AG04450 (cell line): ENCODE measurements at regions of chr11 and their contacts with region 1.

Region 1: DNA sequence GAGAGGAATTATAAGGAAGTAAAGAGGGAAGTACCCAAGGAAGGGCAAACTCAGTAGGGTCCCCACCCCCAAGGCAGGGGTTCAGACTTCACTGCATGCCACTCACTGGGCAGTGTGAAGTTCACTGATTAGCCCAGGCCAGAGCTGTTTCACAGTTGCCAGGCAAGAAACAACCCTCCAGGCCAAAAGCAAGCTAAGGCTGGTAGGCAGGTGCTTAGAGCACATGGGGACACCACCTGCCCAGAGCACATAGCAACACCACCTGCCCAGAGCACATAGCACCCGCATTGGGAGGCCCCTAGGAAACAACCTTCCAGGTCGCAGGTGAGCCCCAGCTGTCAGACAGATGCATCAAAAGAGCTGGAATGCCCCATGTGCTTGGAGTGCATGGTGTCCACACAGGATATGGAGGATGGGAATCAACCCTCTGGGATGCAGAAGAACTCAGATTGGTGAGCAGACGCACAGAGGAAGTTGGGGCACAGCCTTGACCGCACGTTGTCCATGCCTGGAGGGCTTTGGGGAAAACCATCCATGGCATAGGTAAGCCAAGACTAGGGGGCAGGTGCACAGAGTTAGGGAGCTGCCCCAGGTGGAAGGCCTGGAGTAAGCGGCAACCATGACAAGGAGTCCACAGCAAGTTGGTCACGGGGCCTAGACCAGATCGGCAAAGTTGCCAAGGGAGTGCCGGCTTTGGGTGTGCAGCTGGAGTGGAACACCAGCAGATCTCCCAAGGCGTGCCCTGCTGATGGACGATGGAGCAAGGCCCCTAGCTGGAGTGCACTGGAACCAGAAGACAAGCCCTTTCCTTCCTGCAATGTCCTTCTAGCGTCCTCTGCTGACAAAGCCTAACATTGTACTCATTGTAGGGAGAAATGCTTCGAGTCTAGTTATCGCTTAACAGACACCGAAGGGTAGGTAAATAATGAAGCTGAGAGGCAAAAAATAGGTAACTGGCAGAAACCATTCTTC is 7.8 kb upstream of the TMEM216 start:
- DNase-seq: no peak
- H3K4me3 ChIP-seq: no peak overlapping the region
- H3K27ac ChIP-seq: no peak overlapping the region
- H3K27me3 ChIP-seq: no peaks in the 10 kb centered on the region
- CTCF ChIP-seq: peak; percentile 40

Region 2: DNA sequence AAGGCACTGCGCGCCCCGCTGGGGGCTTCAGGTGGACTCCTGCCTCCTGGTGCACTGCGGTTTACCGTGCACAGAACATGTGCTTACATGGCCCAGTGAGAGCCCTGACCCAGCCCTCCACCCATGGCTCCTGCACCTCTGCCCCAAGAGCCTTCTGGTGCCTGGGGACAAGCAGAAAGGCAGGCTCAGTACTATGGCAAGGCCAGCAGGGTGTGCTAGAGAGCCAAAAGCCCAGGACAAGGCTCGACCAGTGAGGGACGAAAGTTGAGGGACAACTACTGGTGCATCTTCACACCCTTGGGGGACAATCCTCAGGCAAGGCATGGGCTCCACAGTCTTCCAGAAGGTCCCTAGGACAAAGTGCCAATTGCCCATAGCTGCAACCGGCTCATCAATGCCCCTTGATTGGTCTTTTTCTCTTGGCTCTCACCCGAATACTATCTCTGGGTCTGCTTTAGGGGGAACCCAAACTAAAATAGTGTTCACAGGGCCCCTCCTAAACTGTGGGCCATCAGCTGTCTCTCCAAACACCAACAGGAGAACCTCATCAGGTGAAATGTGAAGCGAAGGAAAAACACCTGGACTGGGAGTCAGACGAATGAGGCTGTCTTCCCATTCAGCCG is 130.0 kb before region 1 on chr11:
- CTCF ChIA-PET with region 1: interaction called, 23 read pairs
- POLR2A ChIA-PET with region 1: interaction called, 3 read pairs
- DNase-seq: peak; percentile 27
- H3K4me3 ChIP-seq: no peak overlapping the region
- H3K27ac ChIP-seq: no peak overlapping the region
- H3K27me3 ChIP-seq: peaks cover 6% of the 10 kb centered on the region
- CTCF ChIP-seq: peak; percentile 93

Region 3: DNA sequence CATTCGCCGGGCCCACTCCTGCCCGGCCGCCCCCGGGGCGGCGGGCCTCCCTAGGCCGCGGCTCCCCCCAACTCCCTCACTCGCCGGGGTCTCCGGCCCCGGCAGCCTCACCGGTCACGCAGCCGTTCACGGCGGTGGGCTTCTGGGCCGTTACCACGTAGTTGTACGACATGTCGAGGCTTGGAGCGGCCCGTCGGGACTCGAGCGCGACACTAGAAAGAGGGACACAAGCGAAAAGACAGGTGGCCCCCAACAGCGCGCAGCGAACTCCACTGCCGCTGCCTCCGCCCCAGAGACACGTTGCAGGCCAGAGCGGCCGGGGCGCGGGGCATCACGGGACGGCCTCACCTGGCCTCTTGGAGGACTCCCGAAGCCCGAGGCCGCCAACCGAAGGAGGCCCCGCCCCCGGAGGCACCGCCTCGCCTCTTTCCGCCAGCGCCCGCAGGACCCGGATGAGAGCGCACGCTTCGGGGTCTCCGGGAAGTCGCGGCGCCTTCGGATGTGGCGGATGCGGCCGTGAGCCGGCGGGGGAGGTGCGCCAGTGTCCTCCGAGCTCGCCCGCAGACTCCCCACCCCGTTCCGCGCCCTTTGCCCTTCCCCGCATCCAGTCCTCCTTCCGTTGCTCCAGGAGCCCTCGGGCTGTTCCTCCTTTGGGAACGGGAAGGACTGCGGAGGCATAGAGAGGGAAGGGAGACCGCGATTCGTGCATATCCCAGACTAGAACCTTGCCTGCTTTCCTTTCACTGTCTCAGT is 51.6 kb before region 1 on chr11 and contains the starts of genes DDB1 and TKFC:
- CTCF ChIA-PET with region 1: interaction called, 519 read pairs
- POLR2A ChIA-PET with region 1: interaction called, 12 read pairs
- DNase-seq: peak; percentile 66
- H3K4me3 ChIP-seq: peak within 1 kb of the TSS; percentile 93
- H3K27ac ChIP-seq: peak within 1 kb of the TSS; percentile 73
- H3K27me3 ChIP-seq: no peaks in the 10 kb centered on the region
- CTCF ChIP-seq: no peak
- polyA plus RNA-seq, gene DDB1: 286 and 340 TPM in 2 replicates
- polyA plus RNA-seq, gene TKFC: 20.3 and 24.9 TPM in 2 replicates

Region 4: DNA sequence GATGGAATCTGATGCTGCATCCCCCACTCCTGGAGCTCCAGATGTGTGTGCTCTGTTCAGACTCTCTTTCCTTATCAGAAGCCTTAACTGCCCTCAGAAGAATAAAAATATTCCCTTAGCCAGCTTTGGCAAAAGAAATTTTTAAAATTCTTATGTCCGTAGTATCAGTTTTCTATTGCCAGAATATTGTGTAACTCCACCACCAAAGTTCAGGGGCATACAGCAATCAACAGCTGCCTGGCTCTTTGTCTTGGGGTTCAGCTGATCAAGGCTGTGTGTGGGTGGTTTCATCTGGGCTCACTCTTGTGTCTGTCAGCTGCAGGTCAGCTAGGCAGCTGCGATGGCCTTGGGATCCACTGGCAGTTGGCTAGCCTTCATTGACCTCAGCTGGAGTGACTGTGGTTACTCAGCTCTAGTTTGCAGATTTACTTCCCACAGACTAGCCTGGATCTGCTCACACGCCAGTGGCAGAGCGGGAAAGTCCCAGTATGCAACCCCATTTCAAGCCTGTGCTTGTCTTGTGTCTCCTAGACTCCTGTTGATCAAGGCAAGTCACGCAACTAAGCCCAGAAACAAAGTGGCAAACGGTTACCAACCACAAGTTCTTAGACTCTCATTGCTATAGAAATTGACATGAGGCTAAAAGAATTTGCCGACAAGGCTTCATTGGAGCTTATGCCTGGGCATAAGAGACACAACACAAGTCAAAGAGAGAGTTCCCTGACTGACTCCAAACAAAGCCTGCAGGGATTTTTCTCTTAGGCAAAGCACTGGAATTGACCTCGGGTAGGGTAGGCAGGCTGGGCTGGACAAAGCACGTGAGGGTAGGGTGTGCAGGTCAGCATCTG is 15.0 kb before region 1 on chr11:
- CTCF ChIA-PET with region 1: interaction called, 15 read pairs
- POLR2A ChIA-PET with region 1: no interaction called
- DNase-seq: peak; percentile 86
- H3K4me3 ChIP-seq: no peak overlapping the region
- H3K27ac ChIP-seq: peak overlapping the region; percentile 84
- H3K27me3 ChIP-seq: no peaks in the 10 kb centered on the region
- CTCF ChIP-seq: no peak